ENCODE measurements at regions of chr11 and their contacts with region 1.

Region 1: GRCh38 chr11:10808553-10809372 is at the start of gene EIF4G2:
- DNase-seq: peak; percentile 96 to 99
- ATAC-seq: peak; percentile 89
- total RNA-seq, gene EIF4G2: 726 to 854 TPM

Region 2: DNA sequence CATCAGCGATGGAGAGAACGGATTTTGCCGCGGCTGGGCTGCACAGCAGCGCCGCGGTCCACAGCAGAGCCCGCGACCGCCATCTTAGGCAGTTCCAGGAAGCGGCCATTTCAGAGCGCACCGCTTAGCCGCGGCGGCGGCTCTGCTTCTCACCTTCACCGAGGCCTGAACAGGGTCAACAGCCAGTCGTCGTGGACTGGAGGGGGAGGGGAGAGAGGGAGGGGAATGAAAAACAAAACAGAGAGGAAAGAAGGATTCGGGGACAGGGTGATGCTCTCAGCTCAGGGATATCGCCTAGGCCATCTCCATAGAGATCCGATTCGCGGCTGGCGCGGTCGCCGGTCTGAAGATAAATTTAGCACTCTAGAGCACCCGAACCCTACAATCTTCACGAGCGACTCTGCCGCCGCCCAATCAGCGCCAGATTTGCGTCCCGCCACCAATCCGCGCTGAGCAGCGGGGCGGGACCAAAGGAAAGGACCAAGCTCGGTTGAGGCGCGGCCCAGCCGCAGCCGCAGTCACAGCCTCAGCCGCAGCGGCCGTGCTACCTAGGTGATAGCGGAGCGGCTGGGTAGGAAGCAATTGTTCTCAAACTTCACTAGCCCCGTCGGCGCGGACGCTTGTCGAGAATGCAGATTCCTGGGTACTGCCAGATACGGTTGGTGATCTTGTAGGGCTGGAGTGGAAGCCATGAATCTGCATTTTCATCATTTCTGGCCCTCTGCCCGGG is 49.1 kb after region 1 on chr11 and contains the start of gene ZBED5:
- intact Hi-C with region 1: loop called in 1 of 2 experiments (anchors 2 kb)
- DNase-seq: peak; percentile 97 to 98
- ATAC-seq: peak; percentile 90
- total RNA-seq, gene ZBED5: 36.9 to 37.5 TPM

Region 3: GRCh38 chr11:10875430-10876021 is 66.8 kb after region 1 on chr11:
- intact Hi-C with region 1: no loop called
- DNase-seq: no peak
- ATAC-seq: no peak

Region 4: DNA sequence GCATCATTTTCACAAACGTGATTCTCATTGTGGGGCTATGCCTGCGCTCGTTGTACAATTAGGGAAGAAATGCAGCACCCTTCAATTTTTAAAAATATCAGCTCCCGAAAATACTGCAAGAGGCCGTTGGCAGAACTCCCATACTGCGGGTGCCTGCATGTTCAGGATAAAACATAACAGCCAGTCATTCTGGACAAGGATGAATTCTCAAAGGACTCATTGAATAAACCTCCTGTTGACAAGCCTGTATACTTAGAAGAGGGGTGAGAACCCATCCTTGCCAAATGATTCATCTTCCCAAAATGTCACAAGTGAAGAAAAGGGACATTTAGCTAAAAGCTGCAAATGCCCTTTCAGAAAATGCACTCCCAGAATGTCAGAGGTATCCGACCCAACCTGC is 402.4 kb after region 1 on chr11:
- intact Hi-C with region 1: no loop called
- DNase-seq: no peak
- ATAC-seq: no peak

Measured in left colon (tissue), 2 donors.